HEK293 (cell line): ENCODE measurements at regions of chr1 and their contacts with region 1.

Region 1: GRCh38 chr1:244272471-244273261 is 179.0 kb downstream of the ADSS2 start:
- H3K4me3 ChIP-seq: no peak overlapping the region
- H3K27ac ChIP-seq: no peak overlapping the region
- H3K4me1 ChIP-seq: no peaks in the 10 kb centered on the region
- CTCF ChIP-seq: peak; percentile 99

Region 2: DNA sequence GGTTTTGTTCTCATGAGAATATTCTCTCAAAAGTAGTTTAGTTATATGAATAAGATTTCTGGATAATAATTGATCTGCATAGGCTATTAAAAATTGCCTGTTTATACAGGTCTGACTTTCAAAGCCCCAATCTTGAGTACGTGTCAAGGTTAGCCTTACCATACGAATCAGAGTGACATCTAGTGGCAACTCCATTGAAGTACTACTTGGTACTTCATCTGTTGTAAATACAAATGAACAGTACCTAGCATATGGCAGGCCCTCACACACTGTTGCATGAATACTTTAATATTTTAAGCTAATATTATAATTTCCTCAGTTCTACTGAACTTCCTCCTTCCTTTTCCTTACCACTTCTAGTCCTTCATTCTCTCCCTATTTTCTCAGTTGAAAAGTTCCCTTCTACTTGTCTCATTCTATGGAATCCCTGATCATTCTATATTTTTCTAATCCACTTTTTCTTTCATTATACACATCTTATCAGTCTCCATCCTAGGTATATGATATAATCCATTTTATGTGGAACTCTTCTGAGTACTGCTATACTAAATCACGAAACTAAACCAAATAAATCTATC is 523.9 kb before region 1 on chr1:
- CTCF ChIA-PET with region 1: interaction called, 13 read pairs
- POLR2A ChIA-PET with region 1: no interaction called
- H3K4me3 ChIP-seq: no peak overlapping the region
- H3K27ac ChIP-seq: no peak overlapping the region
- H3K4me1 ChIP-seq: no peaks in the 10 kb centered on the region
- CTCF ChIP-seq: peak; percentile 63

Region 3: GRCh38 chr1:244021947-244022700 is 250.5 kb before region 1 on chr1:
- CTCF ChIA-PET with region 1: no interaction called
- POLR2A ChIA-PET with region 1: no interaction called
- H3K4me3 ChIP-seq: no peak overlapping the region
- H3K27ac ChIP-seq: no peak overlapping the region
- H3K4me1 ChIP-seq: no peaks in the 10 kb centered on the region
- CTCF ChIP-seq: no peak

Region 4: GRCh38 chr1:244051053-244051444 is 221.6 kb before region 1 on chr1 and contains the start of gene ZBTB18:
- CTCF ChIA-PET with region 1: interaction called, 10 read pairs
- POLR2A ChIA-PET with region 1: no interaction called
- H3K4me3 ChIP-seq: peak within 1 kb of the TSS; percentile 64
- H3K27ac ChIP-seq: peak within 1 kb of the TSS; percentile 45; the same call in 1 of the 2 replicates
- H3K4me1 ChIP-seq: peaks cover 19% of the 10 kb centered on the region
- CTCF ChIP-seq: no peak

Region 5: GRCh38 chr1:244252211-244252610 is 20.5 kb before region 1 on chr1:
- CTCF ChIA-PET with region 1: interaction called, 14 read pairs
- POLR2A ChIA-PET with region 1: no interaction called
- H3K4me3 ChIP-seq: no peak overlapping the region
- H3K27ac ChIP-seq: no peak overlapping the region
- H3K4me1 ChIP-seq: no peaks in the 10 kb centered on the region
- CTCF ChIP-seq: no peak